ENCODE measurements at regions of chr6 and their contacts with region 1.

Region 1: DNA sequence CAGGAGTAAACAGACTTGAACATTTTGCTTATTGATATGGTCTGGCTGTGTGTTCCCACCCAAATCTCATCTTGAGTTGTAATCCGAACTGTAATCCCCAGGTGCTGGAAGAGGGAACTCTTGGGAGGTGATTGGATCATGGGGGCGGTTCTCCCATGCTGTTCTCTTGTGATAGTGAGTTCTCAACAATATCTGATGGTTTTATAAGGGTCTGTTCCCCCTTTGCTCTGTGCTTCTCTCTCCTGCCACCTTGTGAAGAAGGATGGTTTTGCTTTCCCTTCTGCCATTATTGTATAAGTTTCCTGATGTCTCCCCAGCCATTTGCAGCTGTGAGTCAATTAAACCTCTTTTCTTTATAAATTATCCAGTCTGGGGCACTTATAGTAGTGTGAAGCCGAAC is 40.0 kb downstream of the MYLIP start:
- DNase-seq: peak; percentile 56
- ATAC-seq: peak; percentile 59; the same call in 1 of the 2 replicates
- H3K4me3 ChIP-seq: no peak overlapping the region
- H3K27ac ChIP-seq: no peak overlapping the region
- H3K4me1 ChIP-seq: no peaks in the 10 kb centered on the region
- H3K27me3 ChIP-seq: peaks cover 55% of the 10 kb centered on the region
- CTCF ChIP-seq: peak; percentile 62

Region 2: GRCh38 chr6:15691250-15691869 is 477.5 kb before region 1 on chr6:
- CTCF ChIA-PET with region 1: interaction called, 12 read pairs
- POLR2A ChIA-PET with region 1: no interaction called
- intact Hi-C with region 1: no loop called
- DNase-seq: peak; percentile 92
- ATAC-seq: peak; percentile 99
- H3K4me3 ChIP-seq: peak overlapping the region; percentile 67
- H3K27ac ChIP-seq: no peak overlapping the region
- H3K4me1 ChIP-seq: peaks cover 9% of the 10 kb centered on the region
- H3K27me3 ChIP-seq: no peaks in the 10 kb centered on the region
- CTCF ChIP-seq: peak; percentile 99

Region 3: GRCh38 chr6:15811107-15811506 is 357.8 kb before region 1 on chr6:
- CTCF ChIA-PET with region 1: interaction called, 13 read pairs
- POLR2A ChIA-PET with region 1: no interaction called
- intact Hi-C with region 1: no loop called
- DNase-seq: no peak
- ATAC-seq: no peak
- H3K4me3 ChIP-seq: no peak overlapping the region
- H3K27ac ChIP-seq: no peak overlapping the region
- H3K4me1 ChIP-seq: no peaks in the 10 kb centered on the region
- H3K27me3 ChIP-seq: peaks cover 7% of the 10 kb centered on the region; the same call in 1 of the 2 replicates
- CTCF ChIP-seq: 0 out of 2 replicates have a peak, but pooled peaks have one; percentile 18

Region 4: GRCh38 chr6:15893556-15894268 is 275.1 kb before region 1 on chr6:
- CTCF ChIA-PET with region 1: no interaction called
- POLR2A ChIA-PET with region 1: no interaction called
- intact Hi-C with region 1: loop called (anchors 2 kb)
- DNase-seq: peak; percentile 86
- ATAC-seq: peak; percentile 62
- H3K4me3 ChIP-seq: no peak overlapping the region
- H3K27ac ChIP-seq: no peak overlapping the region
- H3K4me1 ChIP-seq: 0 out of 2 replicates have a peak, but pooled peaks cover 4% of the 10 kb centered on the region
- H3K27me3 ChIP-seq: no peaks in the 10 kb centered on the region
- CTCF ChIP-seq: peak; percentile 79

Region 5: GRCh38 chr6:16136621-16137450 is 32.0 kb before region 1 on chr6:
- CTCF ChIA-PET with region 1: no interaction called
- POLR2A ChIA-PET with region 1: no interaction called
- intact Hi-C with region 1: loop called (anchors 2 kb)
- DNase-seq: peak; percentile 87
- ATAC-seq: peak; percentile 95
- H3K4me3 ChIP-seq: peak overlapping the region; percentile 48
- H3K27ac ChIP-seq: peak overlapping the region; percentile 68
- H3K4me1 ChIP-seq: peaks cover 54% of the 10 kb centered on the region
- H3K27me3 ChIP-seq: no peaks in the 10 kb centered on the region
- CTCF ChIP-seq: no peak

Region 6: DNA sequence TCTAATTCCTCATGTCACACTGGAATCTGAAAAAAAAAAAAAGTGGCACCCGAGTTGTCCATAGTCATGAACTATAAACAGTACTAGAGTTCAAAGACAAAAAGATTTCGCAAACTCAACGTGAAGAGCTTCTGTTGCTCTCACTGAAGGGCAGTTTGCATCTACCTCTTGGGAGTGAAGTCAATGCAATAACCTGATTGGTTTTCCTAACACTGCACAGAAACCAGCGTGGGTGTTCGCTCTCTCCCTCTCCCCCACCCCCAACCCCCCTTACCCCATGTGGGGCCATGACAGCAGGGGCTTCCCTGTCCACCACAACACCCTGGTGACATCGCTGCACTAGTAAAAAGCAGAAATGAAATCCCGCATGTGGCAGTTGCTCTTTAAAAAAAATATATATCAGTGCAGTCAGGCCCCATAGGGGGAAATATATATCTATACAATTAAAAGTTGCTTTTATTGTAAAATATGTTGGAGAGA is 136.4 kb after region 1 on chr6:
- CTCF ChIA-PET with region 1: no interaction called
- POLR2A ChIA-PET with region 1: no interaction called
- intact Hi-C with region 1: no loop called
- DNase-seq: no peak
- ATAC-seq: no peak
- H3K4me3 ChIP-seq: no peak overlapping the region
- H3K27ac ChIP-seq: no peak overlapping the region
- H3K4me1 ChIP-seq: no peaks in the 10 kb centered on the region
- H3K27me3 ChIP-seq: no peaks in the 10 kb centered on the region
- CTCF ChIP-seq: no peak

Region 7: DNA sequence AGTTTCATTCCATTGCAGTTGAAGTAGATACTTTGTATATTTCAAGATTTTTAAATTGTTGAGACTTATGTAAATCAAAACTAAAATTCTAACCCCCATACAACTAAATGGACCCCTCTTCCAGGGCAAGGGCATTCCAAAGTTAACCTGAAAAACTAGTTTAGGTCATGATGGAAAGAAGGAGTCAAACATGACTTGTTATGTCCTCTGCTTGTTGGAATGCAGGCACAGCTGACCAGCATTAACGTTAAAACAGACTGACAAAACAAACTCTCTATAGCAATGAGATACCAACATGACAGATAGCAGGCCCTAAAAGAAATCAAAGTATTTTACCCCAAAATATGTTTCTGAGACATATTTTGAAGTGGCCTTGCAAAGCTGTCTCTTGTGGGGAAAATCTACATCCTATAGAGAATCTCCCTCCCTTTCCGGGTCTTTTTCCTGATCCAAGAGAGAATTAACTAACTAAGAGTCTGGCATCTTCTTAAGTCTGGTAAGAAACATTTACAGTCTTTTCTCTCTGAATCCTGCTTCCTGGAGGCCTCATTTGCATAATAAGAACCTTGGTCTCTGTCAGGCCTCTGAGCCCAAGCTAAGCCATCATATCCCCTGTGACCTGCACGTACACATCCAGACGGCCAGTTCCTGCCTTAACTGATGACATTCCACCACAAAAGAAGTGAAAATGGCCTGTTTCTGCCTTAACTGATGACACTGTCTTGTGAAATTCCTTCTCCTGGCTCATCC is 716.7 kb after region 1 on chr6:
- CTCF ChIA-PET with region 1: no interaction called
- POLR2A ChIA-PET with region 1: no interaction called
- intact Hi-C with region 1: no loop called
- DNase-seq: no peak
- ATAC-seq: no peak
- H3K4me3 ChIP-seq: no peak overlapping the region
- H3K27ac ChIP-seq: no peak overlapping the region
- H3K4me1 ChIP-seq: no peaks in the 10 kb centered on the region; the same call in 1 of the 2 replicates
- H3K27me3 ChIP-seq: no peaks in the 10 kb centered on the region
- CTCF ChIP-seq: no peak

Measured in PC-3 (cell line).